Caco-2 (cell line): ENCODE measurements at regions of chr21 and their contacts with region 1.

Region 1: GRCh38 chr21:27759091-27759659 is 792.3 kb upstream of the ADAMTS5 start:
- DNase-seq: peak; percentile 43 to 52
- H3K4me3 ChIP-seq: no peak overlapping the region
- H3K4me3 Mint-ChIP-seq: no peak overlapping the region
- H3K27ac Mint-ChIP-seq: no peak overlapping the region
- H3K4me1 ChIP-seq: 0 out of 2 replicates have a peak, but pooled peaks cover 3% of the 10 kb centered on the region
- H3K4me1 Mint-ChIP-seq: peaks cover 17% of the 10 kb centered on the region
- H3K27me3 ChIP-seq: no peaks in the 10 kb centered on the region
- H3K27me3 Mint-ChIP-seq: peaks cover 5% of the 10 kb centered on the region
- CTCF ChIP-seq: peak in 1 of 2 experiments; percentile 56

Region 2: DNA sequence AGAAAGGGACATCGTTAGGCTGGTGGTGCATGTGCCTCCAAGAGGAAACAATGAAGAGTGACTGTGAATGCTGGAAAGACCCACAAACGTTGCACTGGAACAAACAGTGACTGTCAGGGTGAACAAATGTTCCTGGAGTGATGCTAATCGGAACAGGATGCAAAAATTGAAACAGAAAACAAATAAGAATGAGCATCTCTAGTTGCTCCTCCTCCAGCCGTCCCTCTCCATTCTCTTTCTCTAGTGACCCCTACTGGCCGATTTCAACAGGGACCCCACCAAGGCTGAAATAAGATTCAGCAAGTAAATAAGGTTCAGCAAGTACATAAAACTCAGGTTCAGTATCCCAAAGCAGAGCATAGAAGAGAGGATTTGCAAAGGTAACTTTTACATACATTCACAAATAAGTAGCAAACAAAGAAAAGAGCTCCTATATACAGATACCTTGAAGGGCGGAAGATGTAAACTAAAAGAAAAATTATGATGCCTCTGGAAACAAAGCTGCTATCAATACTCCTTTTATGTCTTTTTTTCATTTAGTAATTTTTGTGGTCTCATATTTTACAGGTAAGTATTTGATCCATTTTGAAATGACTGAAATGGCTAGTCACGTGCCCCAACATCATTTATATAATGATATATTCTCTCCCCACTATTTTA is 43.8 kb after region 1 on chr21:
- CTCF ChIA-PET with region 1: no interaction called
- POLR2A ChIA-PET with region 1: no interaction called
- intact Hi-C with region 1: loop called (anchors 5 kb)
- DNase-seq: peak in 1 of 2 experiments; percentile 43
- H3K4me3 ChIP-seq: no peak overlapping the region
- H3K4me3 Mint-ChIP-seq: no peak overlapping the region
- H3K27ac Mint-ChIP-seq: no peak overlapping the region
- H3K4me1 ChIP-seq: peaks cover 16% of the 10 kb centered on the region
- H3K4me1 Mint-ChIP-seq: peaks cover 27% of the 10 kb centered on the region
- H3K27me3 ChIP-seq: no peaks in the 10 kb centered on the region
- H3K27me3 Mint-ChIP-seq: peaks cover 3% of the 10 kb centered on the region
- CTCF ChIP-seq: peak; percentile 54 to 55

Region 3: DNA sequence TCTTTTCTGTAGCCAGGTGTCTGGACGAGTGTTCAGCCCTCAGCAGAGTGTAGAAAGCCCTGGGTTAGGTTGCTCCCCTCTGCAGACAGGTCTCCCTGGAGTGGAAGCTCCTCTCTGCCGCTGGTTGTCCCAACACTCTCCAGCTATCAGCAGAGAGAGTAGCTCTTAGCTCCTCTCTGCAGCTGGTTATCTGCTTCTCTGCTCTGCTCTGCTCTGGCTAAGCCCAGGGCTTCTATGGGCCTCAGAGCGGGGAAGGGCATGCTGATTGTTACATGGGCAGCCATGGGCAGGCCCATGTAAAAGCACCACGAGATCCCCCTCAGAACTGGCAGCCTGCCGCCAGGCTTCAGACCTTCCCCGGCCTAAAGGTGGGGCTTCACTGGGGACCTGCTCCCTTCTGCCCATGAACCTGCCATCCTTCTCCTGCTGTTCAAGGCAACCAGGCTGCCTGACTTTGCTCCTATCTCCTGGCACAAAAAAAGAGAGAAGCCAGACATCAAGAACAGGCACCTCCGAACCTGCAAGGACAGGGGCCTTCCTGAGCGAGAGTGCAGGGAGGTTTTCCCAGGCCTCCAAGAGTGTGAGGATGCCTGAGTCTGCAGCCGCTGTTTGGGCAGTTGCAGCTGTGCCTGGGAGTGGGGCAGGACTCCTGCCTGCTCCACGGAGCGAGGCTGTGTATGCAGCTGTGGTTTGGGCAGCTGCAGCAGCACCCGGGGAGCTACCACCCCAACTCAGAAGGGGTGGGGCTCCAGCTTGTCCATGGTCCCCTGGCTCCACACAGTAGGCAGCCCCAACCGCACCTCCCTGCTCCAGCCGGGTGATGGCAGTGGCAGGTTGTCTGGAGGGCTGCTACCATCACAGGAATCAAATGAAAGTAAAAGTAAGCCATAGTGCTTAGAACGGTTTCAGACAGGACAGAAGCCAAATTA is 259.8 kb after region 1 on chr21:
- CTCF ChIA-PET with region 1: no interaction called
- POLR2A ChIA-PET with region 1: no interaction called
- intact Hi-C with region 1: no loop called
- DNase-seq: peak; percentile 5 to 25
- H3K4me3 ChIP-seq: no peak overlapping the region
- H3K4me3 Mint-ChIP-seq: no peak overlapping the region
- H3K27ac Mint-ChIP-seq: no peak overlapping the region
- H3K4me1 ChIP-seq: 0 out of 2 replicates have a peak, but pooled peaks cover 5% of the 10 kb centered on the region
- H3K4me1 Mint-ChIP-seq: no peaks in the 10 kb centered on the region
- H3K27me3 ChIP-seq: no peaks in the 10 kb centered on the region
- H3K27me3 Mint-ChIP-seq: no peaks in the 10 kb centered on the region
- CTCF ChIP-seq: no peak

Region 4: DNA sequence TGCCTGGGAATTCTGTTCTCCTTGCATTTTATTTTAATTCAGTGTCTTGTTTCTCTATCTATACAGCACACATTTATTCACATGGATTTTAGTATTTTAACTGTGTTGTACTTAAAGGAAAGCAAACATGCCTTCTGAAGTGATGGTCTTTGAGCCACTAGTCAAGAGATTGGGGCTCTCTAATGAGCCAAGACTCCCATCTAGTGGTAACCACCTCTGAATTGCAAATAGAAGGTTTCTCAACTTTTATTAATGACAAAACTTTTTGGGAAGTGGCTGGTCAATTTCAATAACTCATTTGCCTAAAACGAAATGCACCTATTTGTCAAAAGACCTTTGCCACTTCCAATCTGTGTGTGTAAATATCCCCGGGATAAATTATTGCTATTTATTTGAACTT is 1033.9 kb after region 1 on chr21:
- CTCF ChIA-PET with region 1: no interaction called
- POLR2A ChIA-PET with region 1: no interaction called
- intact Hi-C with region 1: loop called (anchors 5 kb)
- DNase-seq: no peak
- H3K4me3 ChIP-seq: no peak overlapping the region
- H3K4me3 Mint-ChIP-seq: no peak overlapping the region
- H3K27ac Mint-ChIP-seq: no peak overlapping the region
- H3K4me1 ChIP-seq: no peaks in the 10 kb centered on the region
- H3K4me1 Mint-ChIP-seq: no peaks in the 10 kb centered on the region
- H3K27me3 ChIP-seq: no peaks in the 10 kb centered on the region
- H3K27me3 Mint-ChIP-seq: peaks cover 3% of the 10 kb centered on the region
- CTCF ChIP-seq: peak; percentile 19 to 27